Pancreas (tissue), 10 donors: ENCODE measurements at regions of chr3 and their contacts with region 1.

Region 1: DNA sequence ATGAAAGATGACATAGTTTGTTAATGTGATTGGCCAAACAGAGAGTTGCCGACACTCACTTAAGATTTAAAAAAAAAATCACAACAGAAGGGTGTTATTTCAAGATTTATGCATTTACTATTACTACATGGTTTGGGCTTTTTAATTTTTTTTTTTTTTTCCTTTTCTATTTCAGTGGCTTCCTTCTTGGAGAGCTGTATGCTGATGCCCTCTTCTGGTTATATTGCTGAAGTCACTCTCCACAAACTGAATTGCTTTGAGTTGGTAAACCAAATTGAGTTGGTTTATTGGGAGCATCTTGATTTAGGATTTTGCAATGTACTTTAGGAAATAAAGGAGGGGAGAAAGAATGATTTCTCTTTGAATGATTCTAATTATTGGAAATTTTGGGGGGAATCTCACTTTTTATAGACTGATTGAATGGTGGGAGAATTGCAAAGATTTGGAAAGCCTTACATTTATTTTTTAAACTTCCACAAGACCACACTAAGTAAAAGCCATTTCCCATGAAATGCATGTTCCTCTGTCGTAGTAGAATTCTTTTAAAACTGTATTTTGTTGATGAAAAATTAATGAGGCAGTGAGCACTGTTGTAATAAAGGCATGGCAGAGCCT is 186.6 kb upstream of the FEZF2 start:
- DNase-seq: no peak
- ATAC-seq: peak in 3 of 4 donors; percentile 40 to 56 (median 55)
- H3K4me3 ChIP-seq: no peak overlapping the region
- H3K27ac ChIP-seq: no peak overlapping the region
- H3K4me1 ChIP-seq: no peaks in the 10 kb centered on the region
- H3K27me3 ChIP-seq: no peaks in the 10 kb centered on the region
- CTCF ChIP-seq: peak in 2 of 4 donors; percentile 17 to 28

Region 2: GRCh38 chr3:62319570-62320246 is 240.2 kb before region 1 on chr3:
- intact Hi-C with region 1: loop called in 1 of 3 experiments (anchors 10 kb)
- DNase-seq: no peak
- ATAC-seq: peak in 2 of 4 donors; percentile 4 to 41
- H3K4me3 ChIP-seq: peak overlapping the region in 3 of 4 donors; percentile 34 to 63 (median 41)
- H3K27ac ChIP-seq: no peak overlapping the region
- H3K4me1 ChIP-seq: peaks cover 0 to 6% (median 4%) of the 10 kb centered on the region in 3 donors
- H3K27me3 ChIP-seq: no peaks in the 10 kb centered on the region
- CTCF ChIP-seq: no peak

Region 3: DNA sequence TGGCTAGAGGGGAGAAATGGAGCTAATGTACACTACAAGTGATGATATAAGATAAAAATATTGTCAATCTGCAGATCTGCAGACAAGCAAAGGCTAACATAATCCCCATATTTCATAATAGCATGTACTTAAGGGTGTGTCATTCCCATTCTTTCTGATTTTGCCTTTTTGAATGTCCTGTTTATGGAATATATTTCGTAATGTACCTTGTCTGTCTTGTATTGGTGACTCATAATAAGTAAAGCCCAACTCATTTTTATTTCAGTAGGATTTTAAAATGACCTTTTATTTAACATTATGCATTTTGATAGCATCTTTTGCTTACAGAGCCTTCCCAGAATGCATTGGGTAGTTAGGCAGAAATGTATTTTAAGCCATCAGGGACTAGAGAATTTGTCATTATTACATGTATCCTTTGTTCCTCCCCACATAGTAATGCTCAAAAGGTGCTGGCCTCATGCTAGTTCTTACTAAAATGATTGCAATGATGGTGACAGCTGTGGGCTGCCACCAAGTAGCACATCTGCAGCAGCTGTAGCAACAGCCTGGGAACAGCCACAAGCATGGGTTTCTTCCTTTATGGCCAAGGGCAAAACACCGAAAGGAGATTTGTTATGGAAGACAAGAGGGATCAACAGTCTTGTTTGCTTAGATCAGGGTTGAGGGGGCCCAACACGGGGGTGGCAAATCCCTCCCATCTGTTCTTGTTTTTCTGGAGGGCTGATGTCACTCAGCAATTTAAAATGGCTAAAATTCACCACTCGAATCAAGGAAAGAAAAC is 126.8 kb after region 1 on chr3:
- intact Hi-C with region 1: no loop called
- DNase-seq: no peak
- ATAC-seq: peak in 2 of 4 donors; percentile 38 to 40
- H3K4me3 ChIP-seq: no peak overlapping the region
- H3K27ac ChIP-seq: peak overlapping the region in 1 of 4 donors; percentile 10
- H3K4me1 ChIP-seq: no peaks in the 10 kb centered on the region
- H3K27me3 ChIP-seq: no peaks in the 10 kb centered on the region
- CTCF ChIP-seq: no peak